Dendritic cell treated with granulocyte-macrophage colony-stimulating factor and Interleukin-4, amounts not matched to agents 40 ng/mL and 50 ng/mL, for 4 days (primary cell): ENCODE measurements at regions of chr9 and their contacts with region 1.

Region 1: DNA sequence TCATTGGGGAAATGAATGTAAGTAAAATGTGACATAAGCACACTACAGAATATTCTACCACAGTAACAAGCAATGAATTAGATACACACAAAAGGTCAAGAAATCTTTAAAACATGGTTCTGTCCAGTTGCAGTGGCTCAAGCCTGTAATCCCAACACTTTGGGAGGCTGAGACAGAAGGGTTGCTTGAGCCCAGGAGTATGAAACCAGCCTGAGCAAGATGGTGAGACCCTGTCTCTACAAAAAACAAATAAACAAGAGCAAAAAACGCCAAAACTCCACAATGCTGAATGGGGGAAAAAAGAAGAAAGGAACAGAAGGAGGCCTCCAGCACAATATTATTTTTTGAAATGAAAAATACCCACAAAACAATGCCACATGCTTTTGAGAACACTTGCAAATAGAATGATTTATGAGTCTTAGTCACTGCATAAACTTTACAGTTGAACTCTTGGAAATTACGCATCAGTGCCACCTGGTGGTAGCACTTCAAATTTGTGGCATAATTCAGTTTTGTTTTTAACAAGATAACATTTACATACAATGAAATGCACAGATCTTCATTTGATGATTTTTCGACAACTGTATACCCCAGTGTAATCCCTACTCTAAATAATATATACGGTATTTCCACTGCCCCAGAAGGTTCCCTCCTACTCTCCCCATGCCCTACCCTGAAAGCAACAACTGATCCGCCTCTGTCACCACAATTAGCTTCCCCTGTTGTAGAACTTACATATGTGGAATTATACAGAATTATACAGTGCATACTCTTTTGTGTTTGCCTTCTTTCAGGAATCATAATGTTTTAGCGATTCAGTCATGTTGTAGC is 14.4 kb upstream of the SPINK4 start:
- H3K4me3 Mint-ChIP-seq: peak overlapping the region; percentile 4
- H3K27ac Mint-ChIP-seq: peak overlapping the region; percentile 90
- H3K4me1 Mint-ChIP-seq: peaks cover 62% of the 10 kb centered on the region
- H3K27me3 Mint-ChIP-seq: no peaks in the 10 kb centered on the region

Region 2: DNA sequence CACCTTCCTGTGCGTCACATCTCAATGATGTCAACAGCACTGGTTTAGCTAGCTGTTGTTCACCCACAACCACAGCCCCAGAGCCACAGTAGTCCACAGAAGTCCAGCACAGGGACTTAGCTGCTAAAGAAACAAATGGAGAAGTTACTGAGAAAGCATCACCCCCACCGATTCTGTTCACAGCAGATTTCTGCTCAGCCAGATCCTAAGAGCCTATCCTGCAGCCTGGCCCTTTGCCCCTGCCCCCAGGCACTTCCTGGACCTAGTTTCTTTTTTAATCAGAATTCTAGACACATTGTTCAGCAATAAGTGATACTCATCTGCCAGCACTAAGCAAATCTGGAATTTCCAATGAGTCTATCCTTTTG is 65.8 kb before region 1 on chr9:
- intact Hi-C with region 1: loop called (anchors 2 kb)
- H3K4me3 Mint-ChIP-seq: peak overlapping the region; percentile 60
- H3K27ac Mint-ChIP-seq: peak overlapping the region; percentile 96
- H3K4me1 Mint-ChIP-seq: peaks cover 83% of the 10 kb centered on the region
- H3K27me3 Mint-ChIP-seq: no peaks in the 10 kb centered on the region

Region 3: GRCh38 chr9:33264473-33265177 is 39.1 kb after region 1 on chr9 and contains the starts of genes BAG1 and CHMP5:
- intact Hi-C with region 1: loop called (anchors 1 kb)
- H3K4me3 Mint-ChIP-seq: peak within 1 kb of the TSS; percentile 84
- H3K27ac Mint-ChIP-seq: peak within 1 kb of the TSS; percentile 93
- H3K4me1 Mint-ChIP-seq: peaks cover 41% of the 10 kb centered on the region
- H3K27me3 Mint-ChIP-seq: no peaks in the 10 kb centered on the region

Region 4: GRCh38 chr9:33374634-33375213 is 149.2 kb after region 1 on chr9:
- intact Hi-C with region 1: no loop called
- H3K4me3 Mint-ChIP-seq: no peak overlapping the region
- H3K27ac Mint-ChIP-seq: peak overlapping the region; percentile 23
- H3K4me1 Mint-ChIP-seq: peaks cover 14% of the 10 kb centered on the region
- H3K27me3 Mint-ChIP-seq: no peaks in the 10 kb centered on the region